ENCODE measurements at regions of chr10 and their contacts with region 1.

Region 1: GRCh38 chr10:7525314-7526016 is 114.6 kb upstream of the SFMBT2 start:
- DNase-seq: peak in 8 of 9 donors; percentile 44 to 79 (median 67)
- ATAC-seq: peak; percentile 90
- H3K4me3 ChIP-seq: no peak overlapping the region
- H3K4me3 Mint-ChIP-seq: peak overlapping the region in 3 of 10 donors; percentile 25 to 36 (median 28)
- H3K27ac ChIP-seq: no peak overlapping the region
- H3K27ac Mint-ChIP-seq: peak overlapping the region in 5 of 9 donors; percentile 7 to 52 (median 33)
- H3K4me1 ChIP-seq: peaks cover 0 to 4% of the 10 kb centered on the region in 2 donors
- H3K4me1 Mint-ChIP-seq: peaks cover 12 to 38% (median 17%) of the 10 kb centered on the region in 7 donors
- H3K27me3 ChIP-seq: no peaks in the 10 kb centered on the region
- H3K27me3 Mint-ChIP-seq: peaks cover 0 to 23% (median 0%) of the 10 kb centered on the region in 5 donors

Region 2: GRCh38 chr10:7424315-7424714 is 101.2 kb before region 1 on chr10:
- CTCF ChIA-PET with region 1: interaction called, 3 read pairs
- POLR2A ChIA-PET with region 1: no interaction called
- intact Hi-C with region 1: loop called in 1 of 2 experiments (anchors 1 kb)
- DNase-seq: peak in 1 of 9 donors; percentile 16
- ATAC-seq: peak; percentile 65
- H3K4me3 ChIP-seq: no peak overlapping the region
- H3K4me3 Mint-ChIP-seq: no peak overlapping the region
- H3K27ac ChIP-seq: no peak overlapping the region
- H3K27ac Mint-ChIP-seq: peak overlapping the region in 4 of 9 donors; percentile 6 to 47 (median 23)
- H3K4me1 ChIP-seq: no peaks in the 10 kb centered on the region
- H3K4me1 Mint-ChIP-seq: peaks cover 5 to 24% (median 18%) of the 10 kb centered on the region in 7 donors
- H3K27me3 ChIP-seq: no peaks in the 10 kb centered on the region
- H3K27me3 Mint-ChIP-seq: peaks cover 0 to 34% (median 0%) of the 10 kb centered on the region in 5 donors

Region 3: DNA sequence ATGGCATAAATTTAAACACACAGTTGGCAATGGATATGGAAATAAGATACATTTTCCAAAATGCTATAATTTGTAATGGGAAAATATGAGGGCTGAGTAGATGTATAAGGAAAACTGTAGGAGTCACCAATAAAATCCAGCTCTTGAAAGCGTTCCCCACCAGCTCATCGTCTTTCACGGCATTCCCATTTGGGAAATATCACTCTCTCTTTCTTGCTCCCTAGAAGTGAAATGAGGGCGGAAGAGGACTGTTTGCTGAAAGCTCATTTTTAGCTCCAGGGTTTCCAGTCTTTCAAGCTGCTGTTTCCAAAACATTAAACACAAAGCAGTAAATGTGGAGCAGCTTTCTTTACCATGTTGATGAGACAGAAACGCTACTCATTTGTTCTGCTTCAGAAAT is 10.0 kb before region 1 on chr10:
- CTCF ChIA-PET with region 1: interaction called, 10 read pairs
- POLR2A ChIA-PET with region 1: interaction called, 3 read pairs
- intact Hi-C with region 1: no loop called
- DNase-seq: no peak
- ATAC-seq: no peak
- H3K4me3 ChIP-seq: no peak overlapping the region
- H3K4me3 Mint-ChIP-seq: peak overlapping the region in 1 of 10 donors; percentile 16
- H3K27ac ChIP-seq: no peak overlapping the region
- H3K27ac Mint-ChIP-seq: peak overlapping the region in 1 of 9 donors; percentile 48
- H3K4me1 ChIP-seq: peaks cover 18 to 26% of the 10 kb centered on the region in 2 donors
- H3K4me1 Mint-ChIP-seq: peaks cover 18 to 71% (median 45%) of the 10 kb centered on the region in 7 donors
- H3K27me3 ChIP-seq: no peaks in the 10 kb centered on the region
- H3K27me3 Mint-ChIP-seq: peaks cover 0 to 7% (median 0%) of the 10 kb centered on the region in 5 donors

Region 4: GRCh38 chr10:7687228-7687907 is 161.9 kb after region 1 on chr10:
- CTCF ChIA-PET with region 1: interaction called, 97 read pairs
- POLR2A ChIA-PET with region 1: no interaction called
- intact Hi-C with region 1: loop called (anchors 1 kb)
- DNase-seq: peak; percentile 30 to 82 (median 76)
- ATAC-seq: peak; percentile 96
- H3K4me3 ChIP-seq: no peak overlapping the region
- H3K4me3 Mint-ChIP-seq: peak overlapping the region in 1 of 10 donors; percentile 67
- H3K27ac ChIP-seq: no peak overlapping the region
- H3K27ac Mint-ChIP-seq: peak overlapping the region in 2 of 9 donors; percentile 15 to 28
- H3K4me1 ChIP-seq: no peaks in the 10 kb centered on the region
- H3K4me1 Mint-ChIP-seq: peaks cover 0 to 14% (median 4%) of the 10 kb centered on the region in 7 donors
- H3K27me3 ChIP-seq: no peaks in the 10 kb centered on the region
- H3K27me3 Mint-ChIP-seq: peaks cover 0 to 24% (median 0%) of the 10 kb centered on the region in 5 donors

Region 5: DNA sequence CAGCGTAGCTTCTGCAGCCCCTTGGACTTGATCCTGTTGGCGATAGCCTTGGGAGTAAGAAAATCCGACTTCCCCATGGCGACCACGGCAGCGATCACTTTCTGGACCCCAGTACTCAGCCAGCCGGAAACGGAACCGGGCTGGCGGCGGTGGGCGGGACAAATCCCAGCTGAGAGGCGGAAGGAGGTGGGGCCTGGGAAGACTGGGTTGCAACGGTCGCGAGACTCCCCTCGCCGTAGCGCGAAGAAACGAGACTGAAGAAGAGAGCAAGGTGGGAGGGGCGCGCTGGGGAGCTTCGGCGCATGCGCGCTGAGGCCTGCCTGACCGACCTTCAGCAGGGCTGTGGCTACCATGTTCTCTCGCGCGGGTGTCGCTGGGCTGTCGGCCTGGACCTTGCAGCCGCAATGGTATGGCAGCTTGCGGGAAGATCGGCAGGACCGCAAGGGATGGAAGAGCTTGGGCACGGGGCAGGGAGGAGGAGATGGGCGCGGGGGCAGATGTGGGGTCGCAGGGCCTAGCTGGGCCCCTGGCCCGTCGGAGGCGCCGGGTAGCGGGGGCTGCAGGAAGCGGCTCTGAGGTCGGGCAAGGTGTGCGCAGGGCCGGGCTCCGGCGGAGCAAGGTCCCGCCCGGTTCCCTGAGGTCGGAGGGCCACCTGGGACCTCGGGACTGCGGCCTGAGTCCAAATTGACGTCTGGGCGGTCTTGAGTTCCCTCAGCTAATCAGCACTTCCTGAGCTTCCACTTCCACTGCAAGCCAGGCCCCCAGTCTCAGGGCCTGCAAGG is 262.6 kb after region 1 on chr10 and contains the starts of genes ATP5F1C and KIN:
- CTCF ChIA-PET with region 1: no interaction called
- POLR2A ChIA-PET with region 1: no interaction called
- intact Hi-C with region 1: loop called in 1 of 2 experiments (anchors 1 kb)
- DNase-seq: peak; percentile 93 to 98 (median 96)
- ATAC-seq: peak; percentile 98
- H3K4me3 ChIP-seq: peak within 1 kb of the TSS; percentile 79
- H3K4me3 Mint-ChIP-seq: no peak within 1 kb of the TSS
- H3K27ac ChIP-seq: peak within 1 kb of the TSS; percentile 84
- H3K27ac Mint-ChIP-seq: peak within 1 kb of the TSS in 1 of 9 donors; percentile 90
- H3K4me1 ChIP-seq: peaks cover 21 to 28% of the 10 kb centered on the region in 2 donors
- H3K4me1 Mint-ChIP-seq: peaks cover 47 to 77% (median 57%) of the 10 kb centered on the region in 7 donors
- H3K27me3 ChIP-seq: no peaks in the 10 kb centered on the region
- H3K27me3 Mint-ChIP-seq: no peaks in the 10 kb centered on the region
- total RNA-seq, gene ATP5F1C: 113 to 290 (median 122) TPM
- total RNA-seq, gene KIN: 7.2 to 18.4 (median 14.3) TPM

Region 6: GRCh38 chr10:8473205-8473604 is 947.7 kb after region 1 on chr10:
- CTCF ChIA-PET with region 1: no interaction called
- POLR2A ChIA-PET with region 1: no interaction called
- intact Hi-C with region 1: loop called in 1 of 2 experiments (anchors 10 kb)
- DNase-seq: peak in 7 of 9 donors; percentile 8 to 61 (median 36)
- ATAC-seq: peak; percentile 51
- H3K4me3 ChIP-seq: no peak overlapping the region
- H3K4me3 Mint-ChIP-seq: no peak overlapping the region
- H3K27ac ChIP-seq: no peak overlapping the region
- H3K27ac Mint-ChIP-seq: no peak overlapping the region
- H3K4me1 ChIP-seq: no peaks in the 10 kb centered on the region
- H3K4me1 Mint-ChIP-seq: peaks cover 0 to 3% (median 0%) of the 10 kb centered on the region in 7 donors
- H3K27me3 ChIP-seq: no peaks in the 10 kb centered on the region
- H3K27me3 Mint-ChIP-seq: peaks cover 8 to 46% (median 25%) of the 10 kb centered on the region in 5 donors

Region 7: GRCh38 chr10:9302120-9302746 is 1776.8 kb after region 1 on chr10:
- CTCF ChIA-PET with region 1: interaction called, 3 read pairs
- POLR2A ChIA-PET with region 1: interaction called, 3 read pairs
- intact Hi-C with region 1: loop called (anchors 1 kb)
- DNase-seq: peak in 7 of 9 donors; percentile 21 to 62 (median 53)
- ATAC-seq: peak; percentile 68
- H3K4me3 ChIP-seq: no peak overlapping the region
- H3K4me3 Mint-ChIP-seq: no peak overlapping the region
- H3K27ac ChIP-seq: no peak overlapping the region
- H3K27ac Mint-ChIP-seq: no peak overlapping the region
- H3K4me1 ChIP-seq: no peaks in the 10 kb centered on the region
- H3K4me1 Mint-ChIP-seq: peaks cover 0 to 3% (median 0%) of the 10 kb centered on the region in 7 donors
- H3K27me3 ChIP-seq: no peaks in the 10 kb centered on the region
- H3K27me3 Mint-ChIP-seq: peaks cover 0 to 10% (median 5%) of the 10 kb centered on the region in 5 donors

Measured in naive thymus-derived CD4-positive, alpha-beta T cell (primary cell).